ENCODE measurements at regions of chr3 and their contacts with region 1.

Region 1: DNA sequence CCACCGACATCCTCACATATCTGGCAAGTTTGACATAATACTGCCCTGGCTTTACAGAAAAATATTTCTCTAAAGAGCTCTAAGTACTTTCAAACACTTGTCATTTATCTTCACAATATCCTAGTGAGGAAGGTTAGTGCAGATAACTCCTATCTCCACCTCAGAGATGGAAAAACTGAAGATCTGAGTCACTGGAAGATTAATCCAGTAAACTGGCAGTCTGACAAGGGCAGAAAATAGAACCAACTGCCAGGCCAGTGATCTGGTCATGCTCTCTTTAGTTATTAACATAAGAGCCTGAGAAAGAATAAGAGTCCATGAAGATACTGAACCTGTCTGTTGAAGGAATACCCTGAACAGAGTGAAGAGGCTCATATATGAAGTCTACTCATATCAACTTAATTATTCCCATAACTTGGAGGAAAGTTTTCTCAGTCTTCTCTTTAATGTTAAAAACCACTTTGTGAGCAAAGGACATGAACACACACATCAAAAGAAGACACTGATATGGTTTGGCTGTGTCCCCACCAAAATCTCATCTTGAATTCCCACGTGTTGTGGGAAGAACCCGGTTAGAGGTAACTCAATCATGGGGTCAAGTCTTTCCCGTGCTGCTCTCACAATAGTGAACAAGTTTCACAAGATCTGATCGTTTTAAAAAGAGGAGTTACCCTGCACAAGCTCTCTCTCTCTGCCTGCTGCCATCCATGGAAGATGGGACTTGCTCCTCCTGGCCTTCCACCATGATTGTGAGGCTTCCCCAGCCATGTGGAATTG is 61.4 kb downstream of the GOLIM4 start:
- DNase-seq: peak in 2 of 3 donors; percentile 25 to 40
- H3K4me3 ChIP-seq: no peak overlapping the region
- H3K27ac ChIP-seq: peak overlapping the region in 1 of 2 experiments; percentile 9
- H3K4me1 ChIP-seq: peaks cover 0 to 4% (median 0%) of the 10 kb centered on the region in 4 experiments
- H3K27me3 ChIP-seq: no peaks in the 10 kb centered on the region

Region 2: GRCh38 chr3:167929968-167930367 is 104.4 kb before region 1 on chr3:
- CTCF ChIA-PET with region 1: interaction called, 20 read pairs
- POLR2A ChIA-PET with region 1: no interaction called
- DNase-seq: no peak
- H3K4me3 ChIP-seq: no peak overlapping the region
- H3K27ac ChIP-seq: no peak overlapping the region
- H3K4me1 ChIP-seq: no peaks in the 10 kb centered on the region
- H3K27me3 ChIP-seq: no peaks in the 10 kb centered on the region